PC-9 (cell line): ENCODE measurements at regions of chr1 and their contacts with region 1.

Region 1: DNA sequence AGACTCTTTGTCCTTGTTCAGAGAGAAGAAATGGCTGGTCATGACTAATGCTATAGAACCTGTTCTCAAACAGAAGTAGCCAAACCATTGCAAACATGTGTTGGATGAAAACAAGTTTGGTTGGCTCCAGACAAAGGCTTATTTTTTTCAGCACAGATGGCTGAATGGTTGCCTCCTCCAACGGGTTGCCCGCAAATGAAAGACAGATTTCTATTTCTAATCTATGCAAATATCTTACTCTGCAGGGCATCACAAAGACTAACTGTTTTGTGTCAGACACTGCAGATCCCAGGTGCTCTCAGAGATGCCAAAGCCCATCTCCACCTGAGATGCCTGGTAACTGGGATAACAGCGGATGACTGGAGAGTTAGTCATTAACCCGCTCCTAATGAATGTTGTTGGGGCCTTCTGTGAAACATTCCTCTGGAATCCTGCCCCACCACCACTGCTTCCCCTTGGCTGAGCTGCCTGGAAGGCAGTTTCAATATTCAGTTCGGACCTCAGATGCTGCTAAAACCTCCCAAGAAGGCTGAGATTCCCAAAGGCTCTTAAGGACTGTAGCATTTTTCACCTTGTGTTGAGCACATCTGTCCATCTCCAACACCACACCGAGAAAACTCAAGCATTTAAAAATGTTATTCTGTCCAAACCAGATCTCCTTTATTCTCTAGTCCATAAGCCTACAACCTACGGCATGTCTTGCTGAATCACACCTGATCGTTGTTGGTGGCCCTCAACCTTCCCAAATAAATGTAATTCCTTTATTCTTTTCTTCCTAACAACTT is 104.4 kb downstream of the PTPN14 start:
- DNase-seq: peak; percentile 85 to 99
- H3K4me3 ChIP-seq: peak overlapping the region; percentile 44; the same call in 1 of the 2 replicates
- H3K27ac ChIP-seq: peak overlapping the region; percentile 90
- H3K4me1 ChIP-seq: peaks cover 50% of the 10 kb centered on the region
- H3K27me3 ChIP-seq: no peaks in the 10 kb centered on the region
- CTCF ChIP-seq: no peak

Region 2: GRCh38 chr1:214367841-214368240 is 79.1 kb before region 1 on chr1:
- CTCF ChIA-PET with region 1: no interaction called
- POLR2A ChIA-PET with region 1: no interaction called
- intact Hi-C with region 1: no loop called
- DNase-seq: no peak
- H3K4me3 ChIP-seq: no peak overlapping the region
- H3K27ac ChIP-seq: no peak overlapping the region
- H3K4me1 ChIP-seq: no peaks in the 10 kb centered on the region
- H3K27me3 ChIP-seq: no peaks in the 10 kb centered on the region
- CTCF ChIP-seq: no peak

Region 3: DNA sequence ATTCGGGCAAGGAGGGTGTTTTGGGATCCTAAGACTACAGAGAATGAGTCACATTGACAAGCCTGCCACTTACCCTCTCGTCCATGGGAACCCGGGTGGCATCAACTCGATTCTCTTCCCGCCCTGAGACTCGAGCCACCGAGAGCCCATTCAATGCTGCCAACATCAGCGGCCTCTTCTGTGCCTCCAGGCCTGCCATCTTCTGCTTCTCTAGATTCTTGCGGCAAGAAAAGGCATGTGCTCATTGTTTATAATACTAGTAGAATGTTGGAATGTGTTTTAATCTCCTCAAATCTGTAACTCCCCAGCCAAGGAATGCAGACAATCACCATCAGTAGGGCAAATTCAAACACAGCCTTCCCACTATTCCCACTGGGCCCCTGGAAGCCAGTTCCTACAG is 69.1 kb before region 1 on chr1:
- CTCF ChIA-PET with region 1: no interaction called
- POLR2A ChIA-PET with region 1: no interaction called
- intact Hi-C with region 1: loop called (anchors 1 kb)
- DNase-seq: peak in 1 of 2 experiments; percentile 83
- H3K4me3 ChIP-seq: no peak overlapping the region
- H3K27ac ChIP-seq: no peak overlapping the region
- H3K4me1 ChIP-seq: peaks cover 26% of the 10 kb centered on the region
- H3K27me3 ChIP-seq: no peaks in the 10 kb centered on the region
- CTCF ChIP-seq: no peak

Region 4: DNA sequence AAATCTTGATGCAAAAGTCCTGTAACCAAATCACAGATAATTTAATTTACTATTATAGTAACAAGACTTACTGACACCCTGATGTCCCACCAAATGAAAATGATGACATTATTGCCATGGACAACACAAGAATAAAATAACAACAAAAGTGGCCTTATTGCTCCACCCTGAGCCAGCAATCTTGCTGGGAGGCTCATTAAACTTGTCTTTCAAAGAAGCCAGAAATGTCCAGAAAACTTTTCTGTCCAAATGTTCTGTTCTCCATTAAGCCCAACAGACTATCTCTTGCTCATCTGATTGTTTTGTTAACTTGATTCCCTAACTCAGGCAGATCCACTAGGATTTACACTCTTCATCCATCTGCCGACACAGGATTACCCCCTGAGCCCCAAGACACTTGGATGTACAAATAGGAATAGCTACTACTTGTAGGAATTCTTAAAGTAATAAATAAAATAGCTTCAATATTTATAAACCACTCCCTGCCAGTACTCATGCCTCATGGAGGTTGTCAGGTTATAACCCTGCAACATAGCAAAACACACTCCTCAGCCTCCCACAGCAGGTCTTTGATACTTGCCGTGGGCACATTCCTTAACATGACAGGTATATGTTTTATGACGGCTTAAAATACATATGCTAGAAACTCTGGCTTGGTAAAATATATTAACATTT is 19.6 kb after region 1 on chr1:
- CTCF ChIA-PET with region 1: no interaction called
- POLR2A ChIA-PET with region 1: no interaction called
- intact Hi-C with region 1: loop called (anchors 1 kb)
- DNase-seq: peak; percentile 26 to 73
- H3K4me3 ChIP-seq: no peak overlapping the region
- H3K27ac ChIP-seq: peak overlapping the region; percentile 52
- H3K4me1 ChIP-seq: peaks cover 27% of the 10 kb centered on the region
- H3K27me3 ChIP-seq: no peaks in the 10 kb centered on the region
- CTCF ChIP-seq: no peak

Region 5: DNA sequence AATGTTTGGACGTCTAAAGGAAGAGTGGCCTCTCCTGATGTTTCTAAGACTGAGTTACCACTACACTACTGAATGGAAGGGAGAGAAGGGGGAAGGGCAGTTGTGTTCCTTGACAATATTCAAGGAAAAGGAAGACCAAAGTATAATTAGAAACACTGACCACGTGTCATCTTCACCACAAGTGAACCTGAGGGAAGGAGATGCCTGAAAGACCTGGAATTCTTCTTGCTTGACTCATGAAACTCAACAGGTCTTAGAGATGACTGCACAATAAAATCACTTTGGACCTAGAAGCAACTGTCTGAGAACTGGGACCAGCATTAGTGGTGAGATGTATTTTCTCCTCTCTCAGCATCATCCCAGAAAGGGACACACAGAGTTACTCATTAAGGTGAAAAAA is 47.7 kb after region 1 on chr1:
- CTCF ChIA-PET with region 1: interaction called, 4 read pairs
- POLR2A ChIA-PET with region 1: interaction called, 7 read pairs
- intact Hi-C with region 1: loop called (anchors 1 kb)
- DNase-seq: peak; percentile 41 to 99
- H3K4me3 ChIP-seq: no peak overlapping the region
- H3K27ac ChIP-seq: peak overlapping the region; percentile 32
- H3K4me1 ChIP-seq: peaks cover 43% of the 10 kb centered on the region
- H3K27me3 ChIP-seq: no peaks in the 10 kb centered on the region
- CTCF ChIP-seq: no peak

Region 6: DNA sequence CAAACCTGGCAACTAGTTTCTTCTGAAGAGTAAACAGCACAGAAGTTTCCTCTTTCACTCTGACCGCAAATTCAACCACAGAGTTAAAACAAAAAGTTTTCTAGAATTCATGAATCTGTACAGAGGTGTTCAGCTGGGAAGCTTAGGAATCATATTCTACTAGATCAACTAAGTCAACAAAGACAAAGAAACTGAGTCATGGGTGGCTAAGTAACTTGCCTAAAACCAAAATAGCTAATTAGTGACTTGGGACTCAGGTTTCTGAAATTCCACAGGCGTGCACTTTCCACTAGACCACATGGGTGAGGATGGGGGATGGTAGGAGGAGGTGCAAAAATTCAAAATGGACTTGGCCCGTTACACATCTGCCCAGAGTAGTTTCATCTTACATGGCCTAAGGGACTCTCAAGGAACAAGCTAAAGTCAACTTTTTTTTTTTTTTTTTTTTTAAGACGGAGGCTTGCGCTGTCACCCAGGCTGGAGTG is 78.6 kb after region 1 on chr1:
- CTCF ChIA-PET with region 1: interaction called, 4 read pairs
- POLR2A ChIA-PET with region 1: no interaction called
- intact Hi-C with region 1: loop called (anchors 2 kb)
- DNase-seq: peak; percentile 77 to 96
- H3K4me3 ChIP-seq: peak overlapping the region; percentile 4; the same call in 1 of the 2 replicates
- H3K27ac ChIP-seq: peak overlapping the region; percentile 43
- H3K4me1 ChIP-seq: peaks cover 37% of the 10 kb centered on the region
- H3K27me3 ChIP-seq: no peaks in the 10 kb centered on the region
- CTCF ChIP-seq: no peak